ENCODE measurements at regions of chr1 and their contacts with region 1.

Region 1: GRCh38 chr1:23403735-23404486 is 20.6 kb downstream of the TCEA3 start:
- DNase-seq: peak; percentile 96
- H3K4me3 Mint-ChIP-seq: no peak overlapping the region
- H3K27ac Mint-ChIP-seq: no peak overlapping the region
- H3K4me1 Mint-ChIP-seq: peaks cover 7% of the 10 kb centered on the region
- H3K27me3 Mint-ChIP-seq: no peaks in the 10 kb centered on the region

Region 2: DNA sequence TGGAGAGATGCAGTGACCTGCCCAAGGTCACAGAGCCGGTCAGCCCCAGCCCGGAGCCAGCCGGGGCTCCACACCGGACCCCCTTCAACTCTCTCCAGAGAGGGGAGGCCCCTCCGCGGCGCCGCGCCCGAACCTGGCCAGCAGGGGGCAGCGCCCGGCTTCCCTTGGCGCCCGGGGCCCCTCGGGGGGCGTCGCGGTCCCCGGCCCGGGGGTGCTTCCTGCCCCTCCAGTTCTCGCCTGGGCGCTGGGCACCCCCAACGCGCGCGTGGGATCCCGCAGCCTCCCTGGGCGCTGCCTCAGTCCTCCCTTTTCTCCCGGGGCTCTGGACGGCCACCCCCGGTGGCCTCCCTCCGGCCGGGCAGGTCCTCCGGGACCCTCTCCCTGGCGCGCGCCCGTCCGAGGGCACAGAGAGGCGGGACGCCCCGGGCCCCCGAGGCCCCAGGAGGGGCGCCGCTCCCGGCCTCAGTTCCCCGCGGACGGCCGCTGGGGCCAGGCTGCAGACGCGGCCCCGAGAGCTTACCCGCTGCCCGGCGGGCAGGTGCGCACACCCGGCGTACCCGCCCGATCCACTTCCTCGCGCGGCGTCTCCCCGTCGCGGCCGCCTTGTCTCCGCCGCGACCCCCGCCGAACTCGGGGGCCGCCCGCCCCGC is 187.0 kb before region 1 on chr1:
- intact Hi-C with region 1: loop called (anchors 5 kb)
- DNase-seq: peak; percentile 74
- H3K4me3 Mint-ChIP-seq: peak overlapping the region; percentile 22
- H3K27ac Mint-ChIP-seq: no peak overlapping the region
- H3K4me1 Mint-ChIP-seq: peaks cover 4% of the 10 kb centered on the region
- H3K27me3 Mint-ChIP-seq: peaks cover 74% of the 10 kb centered on the region